ENCODE measurements at regions of chr4 and their contacts with region 1.

Region 1: GRCh38 chr4:1167247-1167949 is 5.0 kb downstream of the SPON2 start:
- DNase-seq: peak; percentile 97
- ATAC-seq: peak; percentile 93
- H3K4me3 Mint-ChIP-seq: peak overlapping the region; percentile 80
- H3K27ac Mint-ChIP-seq: peak overlapping the region; percentile 89
- H3K4me1 Mint-ChIP-seq: peaks cover 21% of the 10 kb centered on the region
- H3K27me3 Mint-ChIP-seq: peaks cover 18% of the 10 kb centered on the region

Region 2: GRCh38 chr4:1008840-1009541 is 158.4 kb before region 1 on chr4:
- CTCF ChIA-PET with region 1: no interaction called
- DNase-seq: peak; percentile 58
- ATAC-seq: peak; percentile 1
- H3K4me3 Mint-ChIP-seq: peak overlapping the region; percentile 65
- H3K27ac Mint-ChIP-seq: no peak overlapping the region
- H3K4me1 Mint-ChIP-seq: peaks cover 15% of the 10 kb centered on the region
- H3K27me3 Mint-ChIP-seq: peaks cover 34% of the 10 kb centered on the region

Region 3: DNA sequence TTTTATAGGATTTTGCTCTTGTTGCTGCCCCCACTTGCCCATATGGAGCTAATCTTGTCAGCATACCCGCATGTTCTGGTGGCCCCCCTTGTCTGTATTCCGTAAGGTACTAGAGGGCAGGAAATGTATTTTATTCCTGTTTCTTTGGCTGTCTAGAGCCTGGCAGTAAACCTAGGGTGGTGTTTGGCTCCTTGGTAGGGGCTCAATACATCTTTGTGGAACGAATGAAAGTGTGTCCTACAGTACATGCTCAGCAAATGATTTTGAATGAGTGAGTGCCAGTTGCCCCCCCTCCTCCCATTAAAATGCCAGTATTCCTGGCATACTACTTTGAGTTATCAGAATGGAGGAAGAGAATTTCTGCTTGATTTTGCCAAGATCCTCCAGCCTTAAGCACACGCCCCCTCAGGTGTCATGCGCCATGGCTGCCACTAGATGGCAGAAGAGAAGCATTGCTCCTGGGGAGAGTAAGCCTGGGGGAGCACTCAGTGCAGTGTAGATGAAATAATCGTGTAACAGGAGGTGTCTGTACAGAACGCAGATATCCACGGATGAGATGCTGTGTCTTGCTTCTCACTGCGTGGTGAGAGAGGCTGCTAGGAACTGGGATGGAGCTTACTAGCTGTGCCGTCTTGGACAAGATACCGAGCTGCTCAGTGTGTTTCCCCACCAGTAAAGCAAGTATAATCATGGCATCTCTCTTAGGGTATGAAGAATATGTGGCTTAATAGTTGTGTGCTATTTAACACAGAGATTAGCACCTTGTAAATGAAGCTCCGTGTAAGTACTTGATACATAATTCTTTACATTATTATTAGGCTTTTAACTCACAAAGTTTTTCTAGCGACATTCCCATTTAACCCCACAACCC is 36.8 kb before region 1 on chr4:
- CTCF ChIA-PET with region 1: interaction called, 16 read pairs
- DNase-seq: peak; percentile 84
- ATAC-seq: peak; percentile 98
- H3K4me3 Mint-ChIP-seq: no peak overlapping the region
- H3K27ac Mint-ChIP-seq: no peak overlapping the region
- H3K4me1 Mint-ChIP-seq: peaks cover 4% of the 10 kb centered on the region
- H3K27me3 Mint-ChIP-seq: peaks cover 15% of the 10 kb centered on the region

Region 4: GRCh38 chr4:1183985-1184773 is 16.8 kb after region 1 on chr4:
- CTCF ChIA-PET with region 1: interaction called, 19 read pairs
- DNase-seq: no peak
- ATAC-seq: peak; percentile 46
- H3K4me3 Mint-ChIP-seq: peak overlapping the region; percentile 57
- H3K27ac Mint-ChIP-seq: peak overlapping the region; percentile 80
- H3K4me1 Mint-ChIP-seq: peaks cover 51% of the 10 kb centered on the region
- H3K27me3 Mint-ChIP-seq: no peaks in the 10 kb centered on the region

Region 5: GRCh38 chr4:1218634-1219565 is 51.5 kb after region 1 on chr4:
- CTCF ChIA-PET with region 1: interaction called, 10 read pairs
- DNase-seq: no peak
- ATAC-seq: no peak
- H3K4me3 Mint-ChIP-seq: no peak overlapping the region
- H3K27ac Mint-ChIP-seq: peak overlapping the region; percentile 67
- H3K4me1 Mint-ChIP-seq: peaks cover 43% of the 10 kb centered on the region
- H3K27me3 Mint-ChIP-seq: no peaks in the 10 kb centered on the region

Region 6: DNA sequence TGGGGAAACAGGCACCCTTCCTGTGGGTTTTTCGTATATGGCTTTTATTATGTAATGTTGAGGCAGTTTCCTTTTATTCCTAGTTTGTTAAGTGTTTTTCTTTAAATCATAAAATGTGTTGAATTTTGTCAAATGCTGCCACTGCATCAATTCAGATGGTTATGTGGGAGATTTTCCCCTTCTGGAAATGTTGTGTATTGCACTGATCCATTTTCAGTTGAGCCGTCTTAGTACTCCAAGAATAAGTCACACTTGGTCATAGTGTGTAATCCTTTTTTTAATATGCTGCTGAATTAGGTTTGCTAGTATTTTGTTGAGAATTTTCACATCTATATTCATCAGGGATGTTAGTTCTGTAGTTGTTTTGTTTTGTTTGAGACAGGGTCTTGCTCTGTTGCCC is 91.1 kb after region 1 on chr4:
- CTCF ChIA-PET with region 1: interaction called, 11 read pairs
- DNase-seq: no peak
- ATAC-seq: no peak
- H3K4me3 Mint-ChIP-seq: no peak overlapping the region
- H3K27ac Mint-ChIP-seq: peak overlapping the region; percentile 7
- H3K4me1 Mint-ChIP-seq: peaks cover 43% of the 10 kb centered on the region
- H3K27me3 Mint-ChIP-seq: no peaks in the 10 kb centered on the region

Region 7: DNA sequence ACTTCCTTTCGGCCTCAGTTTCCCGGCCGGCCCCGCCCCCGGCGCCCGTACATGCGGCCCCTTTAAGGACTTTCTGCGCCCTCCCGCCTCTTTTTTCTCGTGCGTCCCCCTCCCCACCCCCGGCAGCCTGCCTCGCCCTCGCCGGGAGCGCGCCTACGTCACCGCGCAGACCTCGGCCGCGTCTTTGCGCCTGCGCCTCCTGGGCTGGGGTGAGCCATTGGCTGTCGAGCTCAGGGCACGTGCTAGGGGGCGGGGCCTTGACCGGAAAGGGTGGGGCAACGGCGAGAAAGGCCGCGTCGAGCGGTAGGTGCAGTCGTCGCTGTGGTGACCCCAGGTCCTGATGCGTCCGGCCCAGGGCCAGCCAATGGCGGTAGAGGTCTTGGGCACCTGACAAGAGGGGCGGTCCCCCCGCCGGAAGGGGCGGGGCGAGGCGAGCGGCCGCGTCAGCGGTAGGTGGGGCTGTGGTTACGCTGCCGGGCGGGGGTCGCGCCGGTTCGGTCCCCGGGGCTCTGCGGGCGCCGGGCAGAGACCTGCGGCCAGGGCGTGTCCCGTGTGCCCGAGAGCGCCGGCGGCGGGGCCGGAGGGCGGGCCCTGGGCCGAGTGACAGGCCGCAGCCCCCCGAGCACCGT is 179.5 kb after region 1 on chr4 and contains the start of gene UVSSA:
- CTCF ChIA-PET with region 1: interaction called, 22 read pairs
- DNase-seq: peak; percentile 100
- ATAC-seq: peak; percentile 93
- H3K4me3 Mint-ChIP-seq: peak within 1 kb of the TSS; percentile 85
- H3K27ac Mint-ChIP-seq: peak within 1 kb of the TSS; percentile 96
- H3K4me1 Mint-ChIP-seq: peaks cover 36% of the 10 kb centered on the region
- H3K27me3 Mint-ChIP-seq: no peaks in the 10 kb centered on the region
- total RNA-seq, gene UVSSA: 18.2 to 25.2 TPM